ENCODE measurements at regions of chr16 and their contacts with region 1.

Region 1: DNA sequence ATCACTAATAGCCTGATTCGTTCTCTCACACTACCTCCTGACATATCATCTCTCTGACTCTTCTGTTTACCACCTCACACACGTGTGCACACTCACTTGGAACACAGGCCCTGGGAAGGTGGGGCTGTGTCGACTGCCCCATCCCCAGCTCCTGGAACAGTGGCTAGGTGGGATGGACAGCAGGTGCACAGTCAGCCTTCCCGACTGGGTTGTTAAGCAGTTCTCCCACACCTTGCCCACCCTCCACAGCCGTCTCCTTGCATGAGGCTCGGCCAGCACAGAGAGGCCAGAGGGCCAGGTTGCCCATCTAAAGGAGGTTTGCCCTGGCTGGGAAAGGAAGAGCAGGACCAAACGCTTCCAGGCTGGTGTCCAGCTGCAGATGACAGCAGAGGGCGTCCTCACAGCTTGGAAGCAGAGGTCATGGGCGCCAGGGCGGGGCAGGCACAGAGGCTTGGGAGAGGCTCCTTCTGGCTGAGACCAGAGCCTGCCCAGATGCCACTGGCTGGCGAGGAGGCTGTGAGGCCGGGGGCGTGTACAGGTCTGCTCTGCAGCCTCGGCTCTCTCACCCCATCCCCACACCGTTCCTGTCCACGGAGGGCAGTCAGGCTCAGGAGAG is 92.8 kb downstream of the AMFR start:
- DNase-seq: peak; percentile 69
- ATAC-seq: peak; percentile 92
- H3K4me3 ChIP-seq: no peak overlapping the region
- H3K27ac ChIP-seq: no peak overlapping the region
- H3K4me1 ChIP-seq: peaks cover 22% of the 10 kb centered on the region
- H3K27me3 ChIP-seq: no peaks in the 10 kb centered on the region
- CTCF ChIP-seq: peak; percentile 62

Region 2: DNA sequence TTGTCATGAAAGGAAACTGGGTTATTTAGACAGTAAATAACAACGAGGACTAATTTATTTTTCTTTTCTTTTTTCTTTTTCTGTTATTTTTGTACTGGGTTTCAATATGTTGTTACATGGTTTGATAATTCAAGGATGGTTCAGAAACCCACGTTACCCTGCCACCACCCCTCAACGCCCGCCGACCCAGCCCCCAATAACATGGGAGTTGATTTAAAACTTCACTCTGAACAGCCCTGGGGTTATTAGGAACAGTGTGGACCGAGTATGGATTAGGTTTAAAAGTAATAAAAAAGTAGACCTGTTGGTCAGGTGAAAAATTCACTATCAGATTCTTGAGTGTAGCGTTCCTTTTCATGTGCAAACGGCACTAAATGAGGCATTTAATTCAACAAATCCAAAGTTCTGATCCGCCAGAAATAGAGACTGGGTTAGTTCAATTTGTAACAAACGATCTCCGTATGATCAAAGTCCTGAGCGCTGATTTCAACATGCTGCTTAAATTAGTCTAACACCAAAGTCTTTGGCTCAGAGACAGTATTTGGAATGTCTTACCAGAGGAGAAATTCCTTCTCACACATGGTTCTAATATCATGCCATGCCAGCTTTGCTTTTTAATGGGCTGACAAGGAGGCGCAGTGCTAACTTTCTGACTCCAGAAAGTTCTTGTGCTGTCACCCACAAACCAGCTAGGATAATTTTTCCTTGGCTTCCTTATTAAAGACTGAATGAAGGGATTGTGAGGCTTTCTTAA is 1872.9 kb before region 1 on chr16:
- CTCF ChIA-PET with region 1: no interaction called
- POLR2A ChIA-PET with region 1: no interaction called
- intact Hi-C with region 1: no loop called
- DNase-seq: no peak
- ATAC-seq: no peak
- H3K4me3 ChIP-seq: no peak overlapping the region
- H3K27ac ChIP-seq: no peak overlapping the region
- H3K4me1 ChIP-seq: no peaks in the 10 kb centered on the region
- H3K27me3 ChIP-seq: 0 out of 2 replicates have a peak, but pooled peaks cover 3% of the 10 kb centered on the region
- CTCF ChIP-seq: no peak

Region 3: DNA sequence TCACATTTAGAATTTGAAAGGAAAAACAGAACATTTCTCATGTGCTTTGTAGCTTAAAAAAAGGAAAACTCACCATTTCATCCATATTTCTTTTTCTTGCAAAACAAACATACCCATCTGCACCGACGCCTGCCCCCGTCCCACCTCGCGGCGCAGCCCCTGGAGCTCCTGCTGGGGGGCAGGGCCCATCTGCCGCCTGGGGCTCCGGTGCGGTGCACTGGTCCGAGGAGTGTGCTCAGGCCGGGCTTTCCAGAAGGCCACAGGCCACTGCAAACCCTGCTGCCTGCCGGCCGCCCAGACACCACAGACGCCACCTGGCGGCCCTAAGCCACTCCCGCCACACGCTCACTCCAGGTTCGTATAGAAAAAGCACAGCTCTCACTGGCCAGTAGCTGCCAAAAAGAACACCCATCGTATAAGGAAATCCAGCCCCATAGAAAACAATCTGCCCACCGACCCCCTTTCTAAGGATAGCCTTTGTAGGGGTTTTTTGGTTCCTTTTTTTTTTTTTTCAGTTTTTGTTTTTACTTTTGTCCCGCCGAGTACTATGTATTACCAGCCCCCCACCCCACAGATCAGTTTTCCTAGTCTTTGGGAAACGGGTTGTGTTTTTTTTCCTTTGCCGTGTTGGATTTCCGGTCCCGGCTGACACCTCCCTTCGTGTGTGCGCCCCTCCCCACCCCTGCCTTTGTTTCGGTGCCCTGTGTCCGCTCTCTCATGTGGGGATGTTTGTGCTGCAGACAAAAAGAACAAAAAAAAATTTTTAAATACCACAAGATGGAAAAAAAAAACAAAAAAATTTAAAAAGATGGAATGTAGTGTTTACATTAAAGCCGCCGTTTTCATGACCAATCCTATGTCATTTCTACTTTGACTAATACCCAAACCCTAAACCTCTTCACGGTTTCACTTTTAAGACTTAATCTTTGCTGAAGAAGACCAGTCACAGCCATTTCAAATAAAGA is 24.0 kb after region 1 on chr16:
- CTCF ChIA-PET with region 1: interaction called, 11 read pairs
- POLR2A ChIA-PET with region 1: no interaction called
- intact Hi-C with region 1: loop called (anchors 1 kb)
- DNase-seq: peak; percentile 83
- ATAC-seq: peak; percentile 96
- H3K4me3 ChIP-seq: peak overlapping the region; percentile 67
- H3K27ac ChIP-seq: peak overlapping the region; percentile 28
- H3K4me1 ChIP-seq: peaks cover 9% of the 10 kb centered on the region
- H3K27me3 ChIP-seq: no peaks in the 10 kb centered on the region
- CTCF ChIP-seq: peak; percentile 81

Region 4: DNA sequence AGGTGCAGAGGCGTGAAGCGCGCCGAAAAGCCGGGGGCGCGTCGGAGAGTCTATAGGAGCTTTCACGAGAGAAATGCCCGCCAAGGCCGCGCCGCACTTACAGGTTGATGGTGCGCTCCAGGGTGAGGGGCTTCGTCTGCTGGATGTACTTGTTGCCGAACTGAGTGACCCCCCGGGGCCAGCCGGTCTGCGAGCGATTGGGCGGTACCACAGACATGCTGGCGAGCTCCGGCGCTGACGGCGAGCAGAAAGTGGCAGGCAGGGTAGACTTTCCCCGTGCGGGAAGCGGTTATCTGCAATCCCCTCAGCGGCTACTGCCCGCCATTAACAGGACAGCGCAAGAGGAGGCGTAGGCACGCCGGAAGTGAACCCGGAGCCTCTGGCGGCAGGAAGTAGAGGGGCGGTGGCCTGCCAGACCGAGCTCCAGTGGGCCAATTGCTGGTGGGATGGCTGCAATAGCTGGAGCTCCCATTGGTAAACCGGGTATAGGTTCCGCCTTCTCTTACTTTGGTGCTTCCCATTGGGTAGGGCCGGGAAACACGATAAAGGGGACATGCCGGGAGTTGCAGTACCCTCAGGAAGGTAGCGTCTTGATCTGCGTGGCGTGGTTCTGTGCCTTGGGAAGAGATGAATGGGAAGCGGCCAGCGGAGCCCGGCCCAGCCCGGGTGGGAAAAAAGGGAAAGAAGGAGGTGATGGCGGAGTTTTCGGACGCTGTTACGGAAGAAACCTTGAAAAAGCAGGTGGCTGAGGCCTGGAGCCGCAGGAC is 118.6 kb after region 1 on chr16 and contains the starts of genes NUDT21 and OGFOD1:
- CTCF ChIA-PET with region 1: no interaction called
- POLR2A ChIA-PET with region 1: no interaction called
- intact Hi-C with region 1: loop called (anchors 2 kb)
- DNase-seq: peak; percentile 93
- ATAC-seq: peak; percentile 95
- H3K4me3 ChIP-seq: peak within 1 kb of the TSS; percentile 98
- H3K27ac ChIP-seq: peak within 1 kb of the TSS; percentile 61
- H3K4me1 ChIP-seq: peaks cover 24% of the 10 kb centered on the region
- H3K27me3 ChIP-seq: no peaks in the 10 kb centered on the region
- CTCF ChIP-seq: no peak
- total RNA-seq, gene NUDT21: 44.5 and 109 TPM in 2 replicates
- total RNA-seq, gene OGFOD1: 46.4 and 55.5 TPM in 2 replicates

Measured in PC-3 (cell line).